CD4-positive, alpha-beta T cell (primary cell): ENCODE measurements at regions of chr20 and their contacts with region 1.

Region 1: DNA sequence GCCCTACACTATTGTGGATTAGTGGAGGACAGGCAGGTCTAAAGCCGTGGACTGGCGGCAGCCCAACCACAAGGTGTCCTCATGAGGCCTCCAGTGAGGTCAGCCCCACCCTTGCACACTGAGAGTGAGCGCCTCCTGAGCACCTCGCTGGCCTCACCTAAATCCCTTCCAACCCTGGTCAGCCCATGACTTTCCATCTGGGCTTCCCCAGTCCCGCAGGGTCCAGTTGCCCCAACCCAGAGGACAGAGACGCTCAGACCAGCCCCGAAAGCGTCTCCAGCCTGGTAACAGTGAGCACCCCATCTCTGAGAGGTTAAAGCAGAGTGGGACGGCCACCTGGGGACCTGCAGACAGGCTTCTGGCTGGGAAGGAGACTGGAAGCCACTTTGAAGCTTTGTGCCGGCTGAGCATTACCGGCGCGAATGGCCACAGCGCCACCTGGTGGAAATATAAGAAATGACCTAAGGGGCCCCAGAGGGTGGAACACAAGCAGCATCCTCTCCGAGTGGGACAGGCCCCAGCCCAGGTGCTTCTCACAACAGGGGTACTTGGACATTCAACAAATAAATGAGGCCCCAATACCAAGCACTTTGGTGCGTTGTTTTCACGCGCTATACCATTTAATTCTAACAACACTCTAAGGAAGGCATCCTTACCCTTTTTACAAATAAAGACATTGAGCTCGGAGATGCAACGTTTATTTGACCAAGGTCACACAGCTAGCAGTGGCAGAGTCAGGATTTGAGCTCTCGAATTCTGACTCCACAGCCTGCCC is 65.7 kb upstream of the TOP1 start:
- DNase-seq: peak; percentile 49 to 83 (median 66)
- ATAC-seq: peak; percentile 86
- H3K4me3 ChIP-seq: no peak overlapping the region
- H3K4me3 Mint-ChIP-seq: no peak overlapping the region
- H3K27ac ChIP-seq: no peak overlapping the region
- H3K27ac Mint-ChIP-seq: no peak overlapping the region
- H3K4me1 ChIP-seq: peaks cover 19% of the 10 kb centered on the region
- H3K4me1 Mint-ChIP-seq: peaks cover 7% of the 10 kb centered on the region
- H3K27me3 ChIP-seq: no peaks in the 10 kb centered on the region
- H3K27me3 Mint-ChIP-seq: no peaks in the 10 kb centered on the region
- CTCF ChIP-seq: peak; percentile 93

Region 2: DNA sequence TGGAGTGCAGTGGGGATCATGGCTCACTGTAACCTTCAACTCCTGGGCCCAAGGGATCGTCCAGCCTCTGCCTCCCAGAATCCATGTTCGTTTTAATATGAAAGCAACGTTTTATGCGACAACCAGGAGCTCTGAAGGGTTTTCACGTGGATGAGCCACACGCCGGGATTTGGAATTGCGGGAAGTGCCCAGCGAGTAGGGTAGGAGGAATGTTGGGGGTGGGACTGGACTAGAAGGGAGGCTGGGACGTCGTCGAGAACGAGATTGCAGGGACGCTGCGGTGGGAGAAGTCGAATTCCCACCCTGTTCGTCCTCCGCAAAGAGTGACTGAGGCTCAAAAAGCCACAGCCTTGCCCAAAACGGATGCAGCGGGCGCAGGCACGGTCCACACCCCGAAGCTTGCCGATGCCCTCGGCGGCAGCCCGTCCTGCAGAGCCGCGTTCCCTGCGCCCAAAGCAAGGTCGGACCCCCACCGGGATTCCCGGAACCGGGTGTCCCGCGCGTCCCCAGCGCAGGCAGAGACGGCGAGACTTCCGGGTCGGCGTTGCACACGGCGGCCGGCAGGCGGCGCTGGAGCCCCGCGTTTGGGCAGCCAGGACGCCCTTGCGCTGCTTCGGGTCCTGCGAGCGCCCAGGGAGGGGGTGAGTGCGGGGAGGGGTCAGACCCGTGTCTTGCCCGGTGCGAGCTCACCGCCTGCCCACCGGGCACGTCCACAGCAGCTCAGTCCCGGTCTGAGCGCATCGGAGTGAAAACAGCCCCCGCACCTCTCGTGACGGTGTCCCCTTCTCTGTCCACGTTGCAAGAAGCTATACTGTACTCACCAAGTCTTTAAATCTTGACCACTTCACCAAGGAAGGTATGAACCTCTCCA is 1913.0 kb before region 1 on chr20:
- CTCF ChIA-PET with region 1: interaction called, 6 read pairs
- POLR2A ChIA-PET with region 1: no interaction called
- intact Hi-C with region 1: loop called in 1 of 2 experiments (anchors 5 kb)
- DNase-seq: peak; percentile 55 to 90 (median 76)
- ATAC-seq: peak; percentile 88
- H3K4me3 ChIP-seq: peak overlapping the region; percentile 79
- H3K4me3 Mint-ChIP-seq: peak overlapping the region; percentile 84
- H3K27ac ChIP-seq: peak overlapping the region in 1 of 2 donors; percentile 35
- H3K27ac Mint-ChIP-seq: peak overlapping the region; percentile 25
- H3K4me1 ChIP-seq: peaks cover 15% of the 10 kb centered on the region
- H3K4me1 Mint-ChIP-seq: peaks cover 11% of the 10 kb centered on the region
- H3K27me3 ChIP-seq: peaks cover 0 to 2% of the 10 kb centered on the region in 2 experiments
- H3K27me3 Mint-ChIP-seq: no peaks in the 10 kb centered on the region
- CTCF ChIP-seq: peak; percentile 99

Region 3: GRCh38 chr20:39268981-39269461 is 1693.9 kb before region 1 on chr20:
- CTCF ChIA-PET with region 1: interaction called, 3 read pairs
- POLR2A ChIA-PET with region 1: no interaction called
- intact Hi-C with region 1: loop called in 1 of 2 experiments (anchors 2 kb)
- DNase-seq: peak in 7 of 14 experiments; percentile 3 to 35 (median 17)
- ATAC-seq: no peak
- H3K4me3 ChIP-seq: no peak overlapping the region
- H3K4me3 Mint-ChIP-seq: no peak overlapping the region
- H3K27ac ChIP-seq: no peak overlapping the region
- H3K27ac Mint-ChIP-seq: no peak overlapping the region
- H3K4me1 ChIP-seq: no peaks in the 10 kb centered on the region
- H3K4me1 Mint-ChIP-seq: no peaks in the 10 kb centered on the region
- H3K27me3 ChIP-seq: no peaks in the 10 kb centered on the region
- H3K27me3 Mint-ChIP-seq: no peaks in the 10 kb centered on the region
- CTCF ChIP-seq: peak; percentile 21

Region 4: GRCh38 chr20:40265825-40266533 is 696.9 kb before region 1 on chr20:
- CTCF ChIA-PET with region 1: no interaction called
- POLR2A ChIA-PET with region 1: no interaction called
- intact Hi-C with region 1: loop called in 1 of 2 experiments (anchors 10 kb)
- DNase-seq: no peak
- ATAC-seq: no peak
- H3K4me3 ChIP-seq: no peak overlapping the region
- H3K4me3 Mint-ChIP-seq: no peak overlapping the region
- H3K27ac ChIP-seq: no peak overlapping the region
- H3K27ac Mint-ChIP-seq: no peak overlapping the region
- H3K4me1 ChIP-seq: no peaks in the 10 kb centered on the region
- H3K4me1 Mint-ChIP-seq: no peaks in the 10 kb centered on the region
- H3K27me3 ChIP-seq: no peaks in the 10 kb centered on the region
- H3K27me3 Mint-ChIP-seq: no peaks in the 10 kb centered on the region
- CTCF ChIP-seq: no peak

Region 5: DNA sequence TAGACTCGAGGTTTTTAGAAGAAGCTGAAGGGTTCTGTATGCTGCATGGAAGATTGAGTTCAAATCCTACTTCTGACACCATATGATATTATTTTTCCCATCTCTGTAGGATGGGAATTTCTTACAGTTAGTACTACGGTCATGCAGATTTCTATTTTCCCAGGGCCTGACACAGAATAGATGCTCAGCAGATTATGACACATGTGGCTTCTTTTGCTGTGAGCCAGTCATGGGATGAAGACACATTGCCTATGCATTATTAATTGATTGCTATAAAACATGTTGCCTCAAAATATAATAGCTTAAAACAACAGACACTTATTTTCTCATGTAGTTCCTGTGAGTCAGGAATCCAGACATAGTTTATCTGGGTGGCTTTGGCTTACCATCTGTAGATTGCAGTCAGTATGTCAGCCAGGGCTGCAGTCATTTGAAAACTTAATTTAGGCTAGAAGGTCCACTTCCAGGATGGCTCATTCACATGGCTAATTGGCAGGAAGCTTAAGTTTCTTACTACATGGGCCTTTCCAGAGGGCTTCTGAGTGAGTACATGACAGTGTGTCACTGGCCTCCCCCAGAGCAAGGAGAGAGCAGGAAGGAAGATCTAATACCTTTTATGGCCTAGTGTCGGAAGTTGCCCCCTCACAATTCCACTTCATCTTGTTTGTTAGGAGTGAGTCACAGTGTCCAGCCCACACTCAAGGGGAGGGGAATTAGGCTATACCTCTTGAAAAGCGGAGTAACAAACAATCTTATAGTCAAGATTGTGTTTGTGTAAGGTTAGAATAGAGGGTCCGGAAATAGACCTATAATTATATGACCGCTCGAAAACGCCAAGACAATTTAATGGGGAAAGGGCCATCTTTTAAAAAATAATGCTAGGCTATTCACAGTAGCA is 95.3 kb after region 1 on chr20:
- CTCF ChIA-PET with region 1: no interaction called
- POLR2A ChIA-PET with region 1: no interaction called
- intact Hi-C with region 1: no loop called
- DNase-seq: peak in 1 of 14 experiments; percentile 15
- ATAC-seq: no peak
- H3K4me3 ChIP-seq: no peak overlapping the region
- H3K4me3 Mint-ChIP-seq: no peak overlapping the region
- H3K27ac ChIP-seq: no peak overlapping the region
- H3K27ac Mint-ChIP-seq: no peak overlapping the region
- H3K4me1 ChIP-seq: peaks cover 6% of the 10 kb centered on the region
- H3K4me1 Mint-ChIP-seq: peaks cover 83% of the 10 kb centered on the region
- H3K27me3 ChIP-seq: no peaks in the 10 kb centered on the region
- H3K27me3 Mint-ChIP-seq: no peaks in the 10 kb centered on the region
- CTCF ChIP-seq: no peak

Region 6: DNA sequence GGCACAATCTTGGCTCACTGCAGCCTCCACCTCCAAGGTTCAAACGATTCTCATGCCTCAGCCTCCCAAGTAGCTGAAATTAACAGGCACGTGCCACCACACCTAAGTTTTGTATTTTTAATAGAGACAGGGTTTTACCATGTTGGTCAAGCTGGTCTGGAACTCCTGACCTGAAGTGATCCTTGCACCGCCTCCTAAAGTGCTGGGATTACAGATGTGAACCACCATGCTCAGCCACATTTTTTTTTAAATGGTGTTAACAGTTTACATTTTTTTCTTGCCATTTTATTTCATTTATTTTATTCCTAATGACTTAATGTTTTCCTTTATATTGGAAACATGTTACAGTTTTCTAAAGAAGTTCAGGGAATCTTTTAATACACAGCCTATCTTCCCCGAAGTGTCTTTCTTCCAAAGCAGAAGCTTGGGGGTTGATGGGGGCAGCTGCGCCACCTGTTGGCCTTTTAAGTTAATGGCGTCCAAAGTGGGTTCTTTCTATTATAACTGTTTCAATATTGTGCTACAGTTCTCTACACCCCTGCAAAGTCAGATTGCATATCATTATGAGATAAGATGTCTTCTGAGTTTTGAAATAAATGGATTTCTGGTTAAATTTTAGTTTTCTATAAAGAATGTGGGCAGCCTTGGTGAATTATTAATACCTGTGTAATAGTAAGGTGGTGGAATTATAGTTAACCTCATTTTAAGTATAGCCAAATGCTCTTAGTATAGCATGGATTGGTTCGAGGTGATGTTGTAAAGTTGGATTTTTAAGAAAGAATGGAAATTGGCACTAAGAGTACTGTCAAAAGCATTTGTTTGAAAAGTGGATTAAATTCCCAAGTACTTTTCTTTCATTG is 132.4 kb after region 1 on chr20:
- CTCF ChIA-PET with region 1: interaction called, 27 read pairs
- POLR2A ChIA-PET with region 1: no interaction called
- intact Hi-C with region 1: loop called (anchors 1 kb)
- DNase-seq: peak; percentile 22 to 82 (median 46)
- ATAC-seq: peak; percentile 75
- H3K4me3 ChIP-seq: no peak overlapping the region
- H3K4me3 Mint-ChIP-seq: no peak overlapping the region
- H3K27ac ChIP-seq: no peak overlapping the region
- H3K27ac Mint-ChIP-seq: peak overlapping the region; percentile 4
- H3K4me1 ChIP-seq: no peaks in the 10 kb centered on the region
- H3K4me1 Mint-ChIP-seq: peaks cover 6% of the 10 kb centered on the region
- H3K27me3 ChIP-seq: no peaks in the 10 kb centered on the region
- H3K27me3 Mint-ChIP-seq: no peaks in the 10 kb centered on the region
- CTCF ChIP-seq: peak; percentile 98